Activated naive CD4-positive, alpha-beta T cell treated with anti-CD3 and anti-CD28 coated beads for 36 hours (primary cell): ENCODE measurements at regions of chr3 and their contacts with region 1.

Region 1: GRCh38 chr3:133805527-133806475 is at the start of gene SRPRB:
- DNase-seq: peak; percentile 98
- H3K4me3 Mint-ChIP-seq: peak within 1 kb of the TSS; percentile 93
- H3K27ac Mint-ChIP-seq: peak within 1 kb of the TSS; percentile 94
- H3K4me1 Mint-ChIP-seq: peaks cover 37% of the 10 kb centered on the region
- H3K27me3 Mint-ChIP-seq: no peaks in the 10 kb centered on the region
- total RNA-seq, gene SRPRB: 55.0 to 56.8 TPM

Region 2: DNA sequence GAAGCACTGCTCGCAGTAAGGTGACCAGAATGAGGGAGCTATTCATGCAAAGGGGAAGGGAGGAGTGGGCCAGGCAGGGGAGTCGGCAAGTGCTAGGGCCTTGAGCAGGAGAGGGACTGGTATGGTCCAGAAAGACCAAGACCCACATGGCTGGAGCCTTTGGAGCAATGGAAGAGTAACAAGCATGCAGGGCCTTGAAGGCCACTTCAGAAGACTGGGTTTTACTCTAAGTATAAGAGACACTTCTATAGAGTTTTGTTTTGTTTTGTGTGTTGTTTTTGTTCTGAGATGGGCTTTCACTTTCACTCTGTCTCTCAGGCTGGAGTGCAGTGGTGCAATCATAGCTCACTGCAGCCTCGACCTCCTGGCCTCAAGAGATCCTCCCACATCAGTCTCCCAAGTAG is 363.9 kb before region 1 on chr3:
- CTCF ChIA-PET with region 1: no interaction called
- intact Hi-C with region 1: loop called (anchors 1 kb)
- DNase-seq: peak; percentile 47
- H3K4me3 Mint-ChIP-seq: peak overlapping the region; percentile 60
- H3K27ac Mint-ChIP-seq: peak overlapping the region; percentile 76
- H3K4me1 Mint-ChIP-seq: peaks cover 30% of the 10 kb centered on the region
- H3K27me3 Mint-ChIP-seq: no peaks in the 10 kb centered on the region

Region 3: GRCh38 chr3:133487920-133488540 is 317.8 kb before region 1 on chr3:
- CTCF ChIA-PET with region 1: interaction called, 3 read pairs
- intact Hi-C with region 1: loop called (anchors 2 kb)
- DNase-seq: peak; percentile 72
- H3K4me3 Mint-ChIP-seq: no peak overlapping the region
- H3K27ac Mint-ChIP-seq: no peak overlapping the region
- H3K4me1 Mint-ChIP-seq: peaks cover 49% of the 10 kb centered on the region
- H3K27me3 Mint-ChIP-seq: no peaks in the 10 kb centered on the region

Region 4: GRCh38 chr3:133661454-133662277 is 144.1 kb before region 1 on chr3 and contains the start of gene TOPBP1:
- CTCF ChIA-PET with region 1: no interaction called
- intact Hi-C with region 1: loop called (anchors 1 kb)
- DNase-seq: peak; percentile 94
- H3K4me3 Mint-ChIP-seq: peak within 1 kb of the TSS; percentile 98
- H3K27ac Mint-ChIP-seq: peak within 1 kb of the TSS; percentile 98
- H3K4me1 Mint-ChIP-seq: peaks cover 28% of the 10 kb centered on the region
- H3K27me3 Mint-ChIP-seq: no peaks in the 10 kb centered on the region
- total RNA-seq, gene TOPBP1: 65.4 to 65.8 TPM

Region 5: DNA sequence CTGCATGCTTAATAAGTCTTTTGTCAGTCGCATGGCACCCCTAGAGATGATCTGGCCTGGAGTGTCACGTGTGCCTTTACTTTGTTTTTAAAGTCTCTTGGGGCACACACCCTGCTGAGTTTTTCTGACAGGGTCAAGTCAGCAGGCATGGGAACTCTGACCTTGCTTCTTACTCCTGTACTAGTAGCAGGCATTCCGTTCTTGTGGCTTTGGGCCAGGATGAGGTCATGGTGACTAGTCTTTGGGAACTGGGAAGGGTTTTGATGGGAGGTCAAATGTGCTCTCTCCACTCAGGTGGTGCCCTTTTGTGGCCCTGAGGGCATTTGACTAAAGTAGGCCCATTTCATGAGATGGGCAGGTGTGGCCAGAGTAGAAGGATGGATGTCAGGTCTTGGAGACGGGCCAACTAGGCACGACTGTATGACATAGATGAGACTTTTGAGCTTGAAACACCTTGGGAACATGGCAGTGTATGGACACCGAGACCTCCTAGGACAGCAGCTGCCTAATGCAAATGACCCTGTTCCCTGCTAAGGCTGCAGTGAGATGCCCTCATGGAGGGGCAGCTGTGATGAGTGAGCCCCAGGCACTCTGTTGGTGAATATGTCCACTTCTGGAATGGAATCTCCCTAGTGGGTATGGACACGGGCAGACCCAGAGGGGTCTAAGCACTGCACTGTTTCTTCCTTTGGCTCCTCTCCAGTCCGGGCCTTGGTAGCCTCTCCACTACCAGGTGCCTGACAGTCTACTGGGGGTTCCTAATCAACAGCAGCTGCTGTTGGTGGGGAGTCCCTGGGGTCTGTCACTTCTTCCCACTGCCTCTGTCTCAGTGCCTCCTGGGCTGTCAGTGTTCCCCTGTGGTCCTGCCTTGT is 16.2 kb after region 1 on chr3:
- CTCF ChIA-PET with region 1: interaction called, 27 read pairs
- intact Hi-C with region 1: loop called (anchors 1 kb)
- DNase-seq: no peak
- H3K4me3 Mint-ChIP-seq: no peak overlapping the region
- H3K27ac Mint-ChIP-seq: no peak overlapping the region
- H3K4me1 Mint-ChIP-seq: peaks cover 2% of the 10 kb centered on the region
- H3K27me3 Mint-ChIP-seq: no peaks in the 10 kb centered on the region

Region 6: GRCh38 chr3:133857767-133858166 is 52.0 kb after region 1 on chr3:
- CTCF ChIA-PET with region 1: no interaction called
- intact Hi-C with region 1: no loop called
- DNase-seq: no peak
- H3K4me3 Mint-ChIP-seq: no peak overlapping the region
- H3K27ac Mint-ChIP-seq: no peak overlapping the region
- H3K4me1 Mint-ChIP-seq: peaks cover 3% of the 10 kb centered on the region
- H3K27me3 Mint-ChIP-seq: no peaks in the 10 kb centered on the region

Region 7: GRCh38 chr3:134239538-134239937 is 433.7 kb after region 1 on chr3:
- CTCF ChIA-PET with region 1: no interaction called
- intact Hi-C with region 1: loop called (anchors 1 kb)
- DNase-seq: peak; percentile 45
- H3K4me3 Mint-ChIP-seq: peak overlapping the region; percentile 30
- H3K27ac Mint-ChIP-seq: peak overlapping the region; percentile 88
- H3K4me1 Mint-ChIP-seq: peaks cover 94% of the 10 kb centered on the region
- H3K27me3 Mint-ChIP-seq: no peaks in the 10 kb centered on the region